PC-3 (cell line): ENCODE measurements at regions of chr17 and their contacts with region 1.

Region 1: DNA sequence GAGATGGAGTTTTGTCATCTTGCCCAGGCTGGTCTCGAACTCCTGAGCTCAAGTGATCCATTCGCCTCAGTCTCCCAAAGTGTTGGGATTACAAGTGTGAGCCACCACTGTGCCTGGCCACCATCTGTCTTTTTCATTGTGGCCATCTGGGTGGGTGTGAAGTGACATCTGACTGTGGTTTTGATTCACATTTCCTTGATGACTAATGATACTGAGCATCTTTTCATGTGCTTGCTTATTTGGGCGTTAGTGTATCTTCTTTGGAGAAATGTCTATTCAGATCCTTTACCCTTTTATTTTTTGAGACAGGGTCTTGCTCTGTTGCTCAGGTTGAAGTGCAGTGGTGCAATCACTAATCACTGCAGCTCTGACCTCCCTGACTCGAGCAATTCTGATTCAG is 53.9 kb upstream of the ERN1 start:
- DNase-seq: peak; percentile 56
- ATAC-seq: peak; percentile 82
- H3K4me3 ChIP-seq: no peak overlapping the region
- H3K27ac ChIP-seq: no peak overlapping the region
- H3K4me1 ChIP-seq: peaks cover 6% of the 10 kb centered on the region; the same call in 1 of the 2 replicates
- H3K27me3 ChIP-seq: no peaks in the 10 kb centered on the region
- CTCF ChIP-seq: no peak

Region 2: GRCh38 chr17:64145757-64146417 is 37.9 kb before region 1 on chr17:
- CTCF ChIA-PET with region 1: no interaction called
- POLR2A ChIA-PET with region 1: no interaction called
- intact Hi-C with region 1: no loop called
- DNase-seq: peak; percentile 100
- ATAC-seq: peak; percentile 88
- H3K4me3 ChIP-seq: peak overlapping the region; percentile 81
- H3K27ac ChIP-seq: peak overlapping the region; percentile 79
- H3K4me1 ChIP-seq: peaks cover 15% of the 10 kb centered on the region
- H3K27me3 ChIP-seq: no peaks in the 10 kb centered on the region
- CTCF ChIP-seq: no peak

Region 3: GRCh38 chr17:64230795-64231408 is 47.1 kb after region 1 on chr17:
- CTCF ChIA-PET with region 1: no interaction called
- POLR2A ChIA-PET with region 1: no interaction called
- intact Hi-C with region 1: loop called (anchors 5 kb)
- DNase-seq: peak; percentile 97
- ATAC-seq: peak; percentile 95
- H3K4me3 ChIP-seq: no peak overlapping the region
- H3K27ac ChIP-seq: peak overlapping the region; percentile 58
- H3K4me1 ChIP-seq: peaks cover 25% of the 10 kb centered on the region
- H3K27me3 ChIP-seq: no peaks in the 10 kb centered on the region
- CTCF ChIP-seq: no peak